Right ventricle myocardium superior (tissue), 1 donor: ENCODE measurements at regions of chr9 and their contacts with region 1.

Region 1: DNA sequence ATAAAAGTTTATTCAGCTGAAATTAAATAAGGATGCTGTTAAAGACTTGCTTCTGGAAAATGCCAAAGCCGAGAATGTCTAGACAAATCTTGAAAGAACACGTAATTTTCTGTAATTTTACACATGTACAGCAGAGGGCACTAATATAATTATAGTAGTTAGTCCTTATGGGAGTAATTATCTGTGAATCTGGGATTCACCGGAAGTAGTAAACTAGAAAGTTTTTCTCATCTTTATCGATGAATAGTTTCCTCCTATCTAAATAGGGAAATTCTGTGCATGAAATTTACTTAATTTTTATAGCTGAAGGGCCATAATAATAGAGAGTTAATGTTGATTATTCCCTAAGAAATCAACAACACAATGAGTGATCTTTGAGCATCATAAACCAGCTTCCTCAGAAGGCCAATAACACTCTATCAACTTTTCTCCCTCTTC is 18.4 kb upstream of the CNTLN start:
- DNase-seq: no peak
- ATAC-seq: peak; percentile 70

Region 2: DNA sequence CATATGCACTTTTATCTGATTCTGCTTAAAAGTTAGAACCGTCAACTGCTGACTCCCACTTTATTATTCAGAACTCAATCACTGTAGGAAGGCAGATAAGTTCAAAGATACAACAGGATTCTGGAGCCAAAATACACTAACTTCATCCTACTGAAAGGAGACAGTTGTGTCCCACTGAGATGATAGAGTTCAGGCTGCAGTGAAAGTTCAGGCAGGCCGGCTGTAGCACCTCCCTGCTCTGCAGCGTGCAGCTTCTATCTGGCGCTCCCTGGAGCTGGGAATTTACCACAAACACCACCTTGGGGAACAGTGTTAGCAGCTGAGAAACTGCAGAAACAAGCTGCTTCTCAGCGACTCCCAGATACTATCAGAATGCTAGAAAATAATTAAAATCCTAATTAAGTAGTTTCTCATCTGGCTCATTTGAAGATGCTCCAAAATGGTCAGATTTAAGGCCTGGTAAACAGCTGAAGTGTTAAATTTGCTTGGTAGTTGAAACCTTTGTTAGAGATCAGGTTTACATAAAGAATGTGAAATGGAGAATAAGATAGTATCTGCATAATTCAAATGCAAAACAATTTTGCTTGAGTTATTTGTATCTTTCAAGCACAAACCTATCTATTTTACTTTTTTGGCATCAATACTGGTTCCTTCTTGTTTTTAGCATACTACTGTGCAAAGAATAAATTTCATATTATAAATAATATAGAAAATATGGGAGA is 33.9 kb before region 1 on chr9:
- intact Hi-C with region 1: no loop called
- DNase-seq: no peak
- ATAC-seq: no peak

Region 3: GRCh38 chr9:17462869-17463464 is 346.5 kb after region 1 on chr9:
- intact Hi-C with region 1: loop called (anchors 5 kb)
- DNase-seq: no peak
- ATAC-seq: no peak